WTC11 (cell line): ENCODE measurements at regions of chr20 and their contacts with region 1.

Region 1: GRCh38 chr20:33211817-33212424 is 5.2 kb upstream of the BPIFA3 start:
- DNase-seq: peak; percentile 75
- ATAC-seq: peak; percentile 95
- H3K4me3 Mint-ChIP-seq: no peak overlapping the region
- H3K27ac Mint-ChIP-seq: no peak overlapping the region
- H3K4me1 Mint-ChIP-seq: no peaks in the 10 kb centered on the region
- H3K27me3 Mint-ChIP-seq: peaks cover 4% of the 10 kb centered on the region
- CTCF ChIP-seq: peak; percentile 53; the same call in 1 of the 2 replicates

Region 2: GRCh38 chr20:33079259-33079658 is 132.7 kb before region 1 on chr20 and contains the start of gene BPIFB4:
- CTCF ChIA-PET with region 1: no interaction called
- POLR2A ChIA-PET with region 1: no interaction called
- DNase-seq: no peak
- ATAC-seq: no peak
- H3K4me3 Mint-ChIP-seq: no peak within 1 kb of the TSS
- H3K27ac Mint-ChIP-seq: no peak within 1 kb of the TSS
- H3K4me1 Mint-ChIP-seq: no peaks in the 10 kb centered on the region
- H3K27me3 Mint-ChIP-seq: no peaks in the 10 kb centered on the region
- CTCF ChIP-seq: no peak
- total RNA-seq, gene BPIFB4: not detected in 3 replicates

Region 3: GRCh38 chr20:33097001-33097400 is 114.9 kb before region 1 on chr20:
- CTCF ChIA-PET with region 1: interaction called, 20 read pairs
- POLR2A ChIA-PET with region 1: no interaction called
- DNase-seq: no peak
- ATAC-seq: no peak
- H3K4me3 Mint-ChIP-seq: no peak overlapping the region
- H3K27ac Mint-ChIP-seq: no peak overlapping the region
- H3K4me1 Mint-ChIP-seq: no peaks in the 10 kb centered on the region
- H3K27me3 Mint-ChIP-seq: no peaks in the 10 kb centered on the region
- CTCF ChIP-seq: no peak

Region 4: DNA sequence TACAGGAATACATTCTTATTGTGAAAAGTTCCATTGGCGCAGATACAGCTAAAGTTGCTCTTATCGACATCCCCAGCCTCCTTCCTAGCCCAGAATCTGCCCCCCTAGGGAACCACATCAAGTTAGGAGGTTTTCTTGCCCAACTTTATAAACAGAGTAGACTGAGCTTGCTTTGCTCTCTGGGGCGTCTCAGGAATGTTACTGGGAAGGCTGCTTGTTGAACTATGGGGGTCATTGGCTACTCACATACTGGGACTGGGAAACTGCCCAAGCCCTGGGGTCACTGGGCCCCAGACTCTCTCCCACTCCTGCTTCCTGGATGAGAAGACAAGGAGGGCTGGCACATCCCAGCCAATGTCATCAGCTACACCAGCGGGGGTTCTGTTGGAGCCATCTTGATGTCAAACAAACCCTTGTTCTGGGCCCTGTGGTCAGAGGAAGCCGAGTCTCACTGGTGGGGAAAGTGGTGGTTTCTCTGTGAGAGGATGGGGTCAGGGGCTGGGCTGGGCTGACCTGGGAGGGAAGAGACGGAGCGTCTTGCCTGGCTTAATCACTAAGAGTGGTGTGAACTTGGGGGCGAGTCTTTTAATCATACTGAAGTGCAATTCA is 106.5 kb before region 1 on chr20:
- CTCF ChIA-PET with region 1: interaction called, 10 read pairs
- POLR2A ChIA-PET with region 1: no interaction called
- DNase-seq: no peak
- ATAC-seq: no peak
- H3K4me3 Mint-ChIP-seq: no peak overlapping the region
- H3K27ac Mint-ChIP-seq: no peak overlapping the region
- H3K4me1 Mint-ChIP-seq: peaks cover 15% of the 10 kb centered on the region
- H3K27me3 Mint-ChIP-seq: no peaks in the 10 kb centered on the region; the same call in 1 of the 2 replicates
- CTCF ChIP-seq: no peak

Region 5: GRCh38 chr20:33239979-33240736 is 28.2 kb after region 1 on chr20:
- CTCF ChIA-PET with region 1: no interaction called
- POLR2A ChIA-PET with region 1: no interaction called
- DNase-seq: no peak
- ATAC-seq: no peak
- H3K4me3 Mint-ChIP-seq: no peak overlapping the region
- H3K27ac Mint-ChIP-seq: no peak overlapping the region
- H3K4me1 Mint-ChIP-seq: no peaks in the 10 kb centered on the region
- H3K27me3 Mint-ChIP-seq: no peaks in the 10 kb centered on the region
- CTCF ChIP-seq: no peak

Region 6: DNA sequence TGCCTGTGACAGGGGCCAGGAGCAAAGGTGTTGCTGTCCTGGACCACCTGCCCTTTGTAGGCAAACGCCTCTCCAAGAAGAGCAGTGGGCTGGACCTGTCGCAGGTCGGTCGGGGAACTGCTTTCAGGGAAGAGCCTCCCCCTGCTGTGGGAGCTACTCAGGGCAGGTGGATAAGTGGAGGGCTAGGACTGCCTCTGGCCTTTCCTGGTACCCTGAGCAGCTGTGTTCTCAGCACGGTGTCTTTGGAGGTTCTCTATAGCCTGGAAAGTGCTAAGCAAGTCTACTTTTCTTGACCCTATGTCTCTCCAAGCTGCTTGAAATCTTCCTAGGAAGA is 106.1 kb after region 1 on chr20:
- CTCF ChIA-PET with region 1: no interaction called
- POLR2A ChIA-PET with region 1: no interaction called
- DNase-seq: peak; percentile 28
- ATAC-seq: peak; percentile 75
- H3K4me3 Mint-ChIP-seq: no peak overlapping the region
- H3K27ac Mint-ChIP-seq: no peak overlapping the region
- H3K4me1 Mint-ChIP-seq: no peaks in the 10 kb centered on the region
- H3K27me3 Mint-ChIP-seq: no peaks in the 10 kb centered on the region; the same call in 1 of the 2 replicates
- CTCF ChIP-seq: no peak